A673 (cell line): ENCODE measurements at regions of chr10 and their contacts with region 1.

Region 1: GRCh38 chr10:35705671-35706070 is 63.6 kb upstream of the FZD8 start:
- DNase-seq: no peak
- H3K4me3 ChIP-seq: no peak overlapping the region
- H3K27ac ChIP-seq: no peak overlapping the region
- H3K4me1 ChIP-seq: no peaks in the 10 kb centered on the region
- H3K27me3 ChIP-seq: no peaks in the 10 kb centered on the region
- CTCF ChIP-seq: no peak

Region 2: DNA sequence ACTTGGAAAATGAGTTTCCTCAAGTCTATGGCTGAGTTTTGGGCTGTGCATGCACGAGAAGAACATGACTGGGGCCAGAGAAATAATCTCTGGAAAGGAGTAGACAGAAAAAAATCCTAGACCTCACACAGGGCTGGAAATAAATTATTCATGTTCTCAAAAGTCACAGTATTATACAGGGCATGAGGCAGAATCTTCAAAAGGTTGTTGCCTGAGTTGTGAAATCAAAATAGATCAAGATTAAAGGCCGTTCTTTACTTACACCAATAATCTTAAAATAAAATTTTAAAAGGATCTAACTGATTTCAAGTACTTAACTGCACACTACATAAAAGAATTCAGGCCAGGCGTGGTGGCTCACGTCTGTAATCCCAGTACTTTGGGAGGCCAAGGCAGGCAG is 593.1 kb before region 1 on chr10:
- CTCF ChIA-PET with region 1: no interaction called
- POLR2A ChIA-PET with region 1: no interaction called
- intact Hi-C with region 1: no loop called
- DNase-seq: no peak
- H3K4me3 ChIP-seq: no peak overlapping the region
- H3K27ac ChIP-seq: no peak overlapping the region
- H3K4me1 ChIP-seq: no peaks in the 10 kb centered on the region
- H3K27me3 ChIP-seq: no peaks in the 10 kb centered on the region
- CTCF ChIP-seq: no peak

Region 3: GRCh38 chr10:35723992-35724391 is 18.3 kb after region 1 on chr10:
- CTCF ChIA-PET with region 1: no interaction called
- POLR2A ChIA-PET with region 1: no interaction called
- intact Hi-C with region 1: loop called (anchors 2 kb)
- DNase-seq: no peak
- H3K4me3 ChIP-seq: no peak overlapping the region
- H3K27ac ChIP-seq: no peak overlapping the region
- H3K4me1 ChIP-seq: no peaks in the 10 kb centered on the region
- H3K27me3 ChIP-seq: no peaks in the 10 kb centered on the region
- CTCF ChIP-seq: no peak

Region 4: GRCh38 chr10:36504758-36505157 is 799.1 kb after region 1 on chr10:
- CTCF ChIA-PET with region 1: no interaction called
- POLR2A ChIA-PET with region 1: no interaction called
- intact Hi-C with region 1: no loop called
- DNase-seq: peak; percentile 48
- H3K4me3 ChIP-seq: no peak overlapping the region
- H3K27ac ChIP-seq: no peak overlapping the region
- H3K4me1 ChIP-seq: peaks cover 14% of the 10 kb centered on the region
- H3K27me3 ChIP-seq: no peaks in the 10 kb centered on the region
- CTCF ChIP-seq: peak; percentile 39